ENCODE measurements at regions of chr11 and their contacts with region 1.

Region 1: GRCh38 chr11:65988791-65989592 is 13.0 kb downstream of the EIF1AD start:
- DNase-seq: peak; percentile 82 to 96 (median 89)
- ATAC-seq: peak; percentile 98
- H3K4me3 ChIP-seq: no peak overlapping the region
- H3K4me3 Mint-ChIP-seq: no peak overlapping the region
- H3K27ac ChIP-seq: no peak overlapping the region
- H3K27ac Mint-ChIP-seq: peak overlapping the region; percentile 61
- H3K4me1 ChIP-seq: peaks cover 10% of the 10 kb centered on the region
- H3K4me1 Mint-ChIP-seq: peaks cover 6% of the 10 kb centered on the region
- H3K27me3 ChIP-seq: no peaks in the 10 kb centered on the region
- H3K27me3 Mint-ChIP-seq: no peaks in the 10 kb centered on the region
- CTCF ChIP-seq: peak; percentile 96

Region 2: GRCh38 chr11:65779851-65780577 is 209.0 kb before region 1 on chr11:
- CTCF ChIA-PET with region 1: interaction called, 7 read pairs
- POLR2A ChIA-PET with region 1: interaction called, 6 read pairs
- intact Hi-C with region 1: loop called (anchors 1 kb)
- DNase-seq: peak; percentile 57 to 89 (median 72)
- ATAC-seq: peak; percentile 73
- H3K4me3 ChIP-seq: peak overlapping the region; percentile 92
- H3K4me3 Mint-ChIP-seq: peak overlapping the region; percentile 88
- H3K27ac ChIP-seq: peak overlapping the region in 1 of 2 donors; percentile 17
- H3K27ac Mint-ChIP-seq: peak overlapping the region; percentile 56
- H3K4me1 ChIP-seq: peaks cover 46% of the 10 kb centered on the region
- H3K4me1 Mint-ChIP-seq: peaks cover 17% of the 10 kb centered on the region
- H3K27me3 ChIP-seq: no peaks in the 10 kb centered on the region
- H3K27me3 Mint-ChIP-seq: peaks cover 12% of the 10 kb centered on the region
- CTCF ChIP-seq: peak; percentile 93

Region 3: GRCh38 chr11:65817835-65818742 is 170.9 kb before region 1 on chr11:
- CTCF ChIA-PET with region 1: no interaction called
- POLR2A ChIA-PET with region 1: no interaction called
- intact Hi-C with region 1: loop called in 1 of 2 experiments (anchors 2 kb)
- DNase-seq: peak; percentile 84 to 98 (median 94)
- ATAC-seq: peak; percentile 89
- H3K4me3 ChIP-seq: peak overlapping the region; percentile 50
- H3K4me3 Mint-ChIP-seq: peak overlapping the region; percentile 81
- H3K27ac ChIP-seq: peak overlapping the region in 1 of 2 donors; percentile 35
- H3K27ac Mint-ChIP-seq: peak overlapping the region; percentile 67
- H3K4me1 ChIP-seq: peaks cover 16% of the 10 kb centered on the region
- H3K4me1 Mint-ChIP-seq: peaks cover 11% of the 10 kb centered on the region
- H3K27me3 ChIP-seq: no peaks in the 10 kb centered on the region
- H3K27me3 Mint-ChIP-seq: no peaks in the 10 kb centered on the region
- CTCF ChIP-seq: peak; percentile 99

Region 4: GRCh38 chr11:66022401-66023185 is 33.6 kb after region 1 on chr11:
- CTCF ChIA-PET with region 1: interaction called, 5 read pairs
- POLR2A ChIA-PET with region 1: no interaction called
- intact Hi-C with region 1: loop called in 1 of 2 experiments (anchors 1 kb)
- DNase-seq: peak; percentile 50 to 86 (median 70)
- ATAC-seq: peak; percentile 98
- H3K4me3 ChIP-seq: no peak overlapping the region
- H3K4me3 Mint-ChIP-seq: no peak overlapping the region
- H3K27ac ChIP-seq: no peak overlapping the region
- H3K27ac Mint-ChIP-seq: no peak overlapping the region
- H3K4me1 ChIP-seq: peaks cover 20% of the 10 kb centered on the region
- H3K4me1 Mint-ChIP-seq: peaks cover 5% of the 10 kb centered on the region
- H3K27me3 ChIP-seq: no peaks in the 10 kb centered on the region
- H3K27me3 Mint-ChIP-seq: peaks cover 7% of the 10 kb centered on the region
- CTCF ChIP-seq: peak; percentile 90

Measured in CD4-positive, alpha-beta T cell (primary cell).